ENCODE measurements at regions of chr6 and their contacts with region 1.

Region 1: DNA sequence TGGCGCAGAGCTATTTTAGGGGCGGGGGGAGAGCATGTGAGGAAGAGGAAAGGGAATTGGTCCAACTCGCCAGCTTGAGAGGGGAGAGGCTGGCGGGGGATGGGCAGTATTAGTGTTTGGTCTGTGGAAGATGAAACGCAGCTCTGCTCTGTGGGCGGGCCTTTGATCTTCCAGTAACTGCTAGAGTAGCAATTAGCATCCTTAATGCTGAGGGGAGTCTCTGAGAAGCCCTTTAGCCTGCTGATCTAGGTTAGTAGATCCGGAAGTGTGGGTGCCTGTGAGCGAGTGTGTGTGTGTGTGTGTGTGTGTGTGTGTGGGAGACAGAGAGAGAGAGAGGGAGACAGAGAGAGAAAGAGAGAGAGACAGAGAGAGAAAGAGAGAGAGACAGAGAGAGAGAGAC is 117.2 kb upstream of the BACH2 start:
- DNase-seq: no peak
- ATAC-seq: peak; percentile 28; the same call in 1 of the 3 replicates
- H3K4me3 ChIP-seq: no peak overlapping the region
- H3K27ac ChIP-seq: no peak overlapping the region
- H3K4me1 ChIP-seq: no peaks in the 10 kb centered on the region
- H3K27me3 ChIP-seq: peaks cover 0 to 3% of the 10 kb centered on the region in 2 experiments; a peak in 2 of 4 replicates
- CTCF ChIP-seq: no peak
- EP300 ChIP-seq: no peak
- POLR2A ChIP-seq: no peak
- RAD21 ChIP-seq: no peak

Region 2: DNA sequence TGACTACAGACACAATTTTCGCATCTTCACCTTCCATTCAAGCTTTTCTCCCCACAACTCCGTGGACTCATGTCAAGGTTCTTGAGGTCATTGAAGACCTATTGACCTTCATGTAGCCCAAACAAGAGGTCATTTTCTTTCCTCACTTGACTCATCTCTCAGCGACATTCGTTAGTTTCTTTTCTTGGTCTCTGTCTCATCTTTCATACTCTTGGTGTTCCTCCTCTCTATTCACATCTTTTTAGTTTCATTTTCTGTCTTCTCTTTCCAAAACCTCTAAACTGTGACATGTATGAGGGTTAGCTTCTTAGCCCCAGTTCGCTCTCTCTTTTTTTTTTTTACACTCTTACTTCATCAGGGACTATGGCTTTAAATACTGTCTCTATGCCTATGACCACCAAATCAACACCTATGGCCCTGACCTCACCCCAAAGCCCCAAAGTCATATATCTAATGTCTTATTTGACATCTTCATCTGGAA is 11.3 kb after region 1 on chr6:
- CTCF ChIA-PET with region 1: interaction called, 3 read pairs
- POLR2A ChIA-PET with region 1: no interaction called
- RAD21 ChIA-PET with region 1: interaction called, 5 read pairs
- SMC1A ChIA-PET with region 1: interaction called, 17 read pairs
- in situ Hi-C with region 1: no loop called
- intact Hi-C with region 1: loop called (anchors 1 kb)
- DNase-seq: peak; percentile 48
- ATAC-seq: peak; percentile 82
- H3K4me3 ChIP-seq: no peak overlapping the region
- H3K27ac ChIP-seq: no peak overlapping the region
- H3K4me1 ChIP-seq: peaks cover 10% of the 10 kb centered on the region
- H3K27me3 ChIP-seq: no peaks in the 10 kb centered on the region
- CTCF ChIP-seq: no peak
- EP300 ChIP-seq: no peak
- POLR2A ChIP-seq: no peak
- RAD21 ChIP-seq: no peak

Region 3: DNA sequence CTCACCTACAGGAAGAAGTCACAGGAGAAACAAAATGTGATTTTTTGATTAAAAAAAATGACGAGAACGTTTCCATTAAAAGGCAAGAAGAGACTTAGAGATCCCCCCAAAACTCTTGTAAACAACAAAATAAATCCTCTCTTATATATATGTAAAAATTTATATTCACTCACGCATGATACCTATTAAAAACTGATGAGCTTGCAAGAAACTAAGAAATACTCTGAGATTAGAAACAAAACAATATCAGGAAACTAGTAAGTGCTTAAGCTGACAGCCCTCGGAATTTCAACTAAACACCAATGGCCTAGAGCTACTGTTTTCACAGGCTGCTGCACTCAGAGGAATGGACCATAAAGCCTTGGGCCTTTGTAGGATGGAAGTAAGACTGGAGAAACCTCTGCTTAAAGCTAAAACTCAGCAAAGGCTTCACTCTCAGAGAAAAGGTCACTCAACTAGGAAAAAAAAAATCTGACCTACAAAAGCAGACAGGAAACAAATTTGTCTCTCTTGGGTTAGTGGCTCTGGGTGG is 110.0 kb after region 1 on chr6:
- CTCF ChIA-PET with region 1: no interaction called
- POLR2A ChIA-PET with region 1: no interaction called
- RAD21 ChIA-PET with region 1: no interaction called
- SMC1A ChIA-PET with region 1: no interaction called
- in situ Hi-C with region 1: no loop called
- intact Hi-C with region 1: no loop called
- DNase-seq: no peak
- ATAC-seq: no peak
- H3K4me3 ChIP-seq: no peak overlapping the region
- H3K27ac ChIP-seq: no peak overlapping the region
- H3K4me1 ChIP-seq: no peaks in the 10 kb centered on the region
- H3K27me3 ChIP-seq: no peaks in the 10 kb centered on the region
- CTCF ChIP-seq: no peak
- EP300 ChIP-seq: no peak
- POLR2A ChIP-seq: no peak
- RAD21 ChIP-seq: no peak

Measured in GM12878 (cell line).